ENCODE measurements at regions of chr10 and their contacts with region 1.

Region 1: GRCh38 chr10:106711313-106711906 is 453.1 kb downstream of the SORCS1 start:
- DNase-seq: peak; percentile 80
- H3K4me3 Mint-ChIP-seq: no peak overlapping the region
- H3K27ac Mint-ChIP-seq: no peak overlapping the region
- H3K4me1 Mint-ChIP-seq: no peaks in the 10 kb centered on the region
- H3K27me3 Mint-ChIP-seq: no peaks in the 10 kb centered on the region

Region 2: GRCh38 chr10:108544494-108545120 is 1833.2 kb after region 1 on chr10:
- intact Hi-C with region 1: loop called (anchors 2 kb)
- DNase-seq: peak; percentile 78
- H3K4me3 Mint-ChIP-seq: no peak overlapping the region
- H3K27ac Mint-ChIP-seq: no peak overlapping the region
- H3K4me1 Mint-ChIP-seq: no peaks in the 10 kb centered on the region
- H3K27me3 Mint-ChIP-seq: no peaks in the 10 kb centered on the region